MCF 10A (cell line): ENCODE measurements at regions of chr3 and their contacts with region 1.

Region 1: GRCh38 chr3:87082796-87083440 is 92.0 kb upstream of the VGLL3 start:
- DNase-seq: peak; percentile 78
- H3K4me3 Mint-ChIP-seq: no peak overlapping the region
- H3K27ac Mint-ChIP-seq: no peak overlapping the region
- H3K4me1 Mint-ChIP-seq: peaks cover 6% of the 10 kb centered on the region
- H3K27me3 Mint-ChIP-seq: no peaks in the 10 kb centered on the region
- CTCF ChIP-seq: peak; percentile 56

Region 2: DNA sequence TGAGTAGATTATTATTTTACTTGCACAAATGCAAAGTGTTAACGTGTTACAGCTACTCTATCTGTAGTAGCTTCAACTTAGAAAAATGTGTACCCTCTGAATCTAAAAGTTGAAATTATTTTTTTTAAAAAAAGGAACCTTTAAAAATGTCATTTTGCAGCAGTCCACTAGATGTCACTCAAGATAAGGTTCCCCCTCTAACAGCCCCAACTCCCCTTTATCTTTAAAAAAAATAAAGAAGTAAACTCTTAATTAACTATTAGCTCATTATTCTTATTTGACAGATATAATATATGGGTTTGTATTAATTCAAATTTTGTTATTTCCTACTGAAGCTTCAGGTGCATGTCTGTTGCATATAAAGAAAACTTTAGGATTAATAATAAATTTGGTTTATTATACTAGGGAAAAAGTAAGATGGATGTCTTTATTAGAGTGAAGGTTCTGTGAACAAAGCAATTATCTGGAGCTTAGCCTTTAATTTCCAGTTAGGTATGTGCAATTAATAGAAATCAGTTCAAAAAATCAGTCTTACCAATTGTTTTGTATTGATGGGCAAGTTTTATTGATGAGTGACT is 380.4 kb before region 1 on chr3:
- CTCF ChIA-PET with region 1: interaction called, 3 read pairs
- POLR2A ChIA-PET with region 1: no interaction called
- intact Hi-C with region 1: loop called (anchors 5 kb)
- DNase-seq: peak; percentile 13
- H3K4me3 Mint-ChIP-seq: no peak overlapping the region
- H3K27ac Mint-ChIP-seq: no peak overlapping the region
- H3K4me1 Mint-ChIP-seq: no peaks in the 10 kb centered on the region
- H3K27me3 Mint-ChIP-seq: peaks cover 37% of the 10 kb centered on the region
- CTCF ChIP-seq: peak; percentile 51

Region 3: DNA sequence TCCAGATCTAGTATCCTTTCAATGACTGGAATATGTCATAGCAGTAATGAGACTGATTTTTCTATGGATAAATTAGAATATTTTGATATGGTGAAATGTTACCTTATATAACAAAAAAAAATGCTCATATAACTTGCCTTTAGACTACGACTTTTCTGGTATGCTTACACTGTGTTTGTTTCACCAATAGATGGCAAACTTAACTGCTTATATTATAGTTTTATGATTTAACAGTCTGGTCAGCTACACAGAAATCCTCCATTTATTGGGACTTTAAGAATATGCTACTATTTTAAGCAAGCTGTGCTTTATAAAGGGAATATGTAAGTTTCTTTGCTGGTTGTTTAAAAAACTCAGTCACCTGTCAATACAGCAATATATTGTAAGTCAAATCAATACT is 297.5 kb before region 1 on chr3:
- CTCF ChIA-PET with region 1: interaction called, 85 read pairs
- POLR2A ChIA-PET with region 1: interaction called, 4 read pairs
- intact Hi-C with region 1: loop called (anchors 1 kb)
- DNase-seq: peak; percentile 35
- H3K4me3 Mint-ChIP-seq: no peak overlapping the region
- H3K27ac Mint-ChIP-seq: no peak overlapping the region
- H3K4me1 Mint-ChIP-seq: peaks cover 6% of the 10 kb centered on the region
- H3K27me3 Mint-ChIP-seq: no peaks in the 10 kb centered on the region
- CTCF ChIP-seq: peak; percentile 35

Region 4: DNA sequence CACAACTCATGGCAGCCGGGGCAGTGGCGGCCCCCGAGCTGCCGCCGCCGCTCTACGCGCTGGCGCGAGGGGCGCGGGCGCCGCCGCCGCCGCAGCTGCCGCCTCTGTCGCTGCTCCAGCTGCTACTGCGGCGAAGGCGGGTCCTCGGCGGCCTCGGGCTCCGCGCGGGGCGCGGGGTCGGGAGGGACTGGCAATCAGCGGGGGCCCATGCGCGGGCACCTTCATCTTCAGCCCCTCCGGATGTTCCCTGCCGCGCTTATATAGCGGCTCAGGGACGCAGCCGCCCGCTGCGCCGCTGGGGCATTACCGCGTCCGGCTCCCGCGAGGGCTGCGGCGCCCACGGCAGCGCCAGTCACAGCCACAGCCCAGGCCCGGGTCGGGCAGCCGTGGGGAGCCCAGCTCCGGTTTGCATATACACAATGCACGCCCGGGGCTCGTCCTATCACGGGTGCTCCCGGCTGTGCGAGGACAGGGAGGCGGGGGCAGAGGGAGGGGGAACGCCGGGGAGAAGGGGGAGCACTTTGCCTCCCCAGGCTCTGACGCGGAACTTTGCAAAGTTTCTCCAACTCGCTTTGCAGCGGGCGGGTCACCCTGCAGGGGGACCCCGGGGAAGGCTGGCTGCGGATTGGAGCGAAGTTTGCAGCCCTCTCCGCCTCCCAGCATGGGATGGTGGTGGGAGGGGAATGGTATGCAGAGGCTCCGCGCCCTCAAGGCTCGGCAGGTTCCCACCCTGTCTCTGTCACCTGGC is 92.0 kb before region 1 on chr3 and contains the start of gene VGLL3:
- CTCF ChIA-PET with region 1: interaction called, 6 read pairs
- POLR2A ChIA-PET with region 1: interaction called, 12 read pairs
- intact Hi-C with region 1: loop called (anchors 5 kb)
- DNase-seq: peak; percentile 80
- H3K4me3 Mint-ChIP-seq: peak within 1 kb of the TSS; percentile 82
- H3K27ac Mint-ChIP-seq: peak within 1 kb of the TSS; percentile 87
- H3K4me1 Mint-ChIP-seq: peaks cover 32% of the 10 kb centered on the region
- H3K27me3 Mint-ChIP-seq: no peaks in the 10 kb centered on the region
- CTCF ChIP-seq: no peak
- total RNA-seq, gene VGLL3: 6.3 and 12.2 TPM in 2 replicates

Region 5: DNA sequence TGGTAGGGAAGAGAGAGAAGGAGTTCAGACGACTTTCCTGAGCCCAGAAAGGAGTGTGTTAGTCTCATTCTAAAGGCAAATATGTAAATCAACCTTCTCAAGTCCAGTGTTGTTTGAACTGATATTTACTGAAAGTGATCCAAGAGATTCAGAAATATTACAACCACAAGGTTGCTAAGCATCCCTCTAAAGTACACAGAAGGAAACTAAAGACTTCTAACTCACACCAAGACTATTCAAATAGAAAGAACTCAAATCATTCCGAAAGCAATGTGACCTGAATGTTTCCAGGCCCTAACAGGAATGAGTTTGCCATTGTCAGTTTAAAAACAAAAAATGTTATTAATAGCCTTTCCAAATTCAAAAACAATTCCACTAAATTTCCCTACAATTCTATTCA is 35.1 kb before region 1 on chr3:
- CTCF ChIA-PET with region 1: no interaction called
- POLR2A ChIA-PET with region 1: no interaction called
- intact Hi-C with region 1: no loop called
- DNase-seq: no peak
- H3K4me3 Mint-ChIP-seq: no peak overlapping the region
- H3K27ac Mint-ChIP-seq: no peak overlapping the region
- H3K4me1 Mint-ChIP-seq: no peaks in the 10 kb centered on the region
- H3K27me3 Mint-ChIP-seq: no peaks in the 10 kb centered on the region
- CTCF ChIP-seq: no peak

Region 6: GRCh38 chr3:87167628-87168456 is 84.9 kb after region 1 on chr3:
- CTCF ChIA-PET with region 1: interaction called, 11 read pairs
- POLR2A ChIA-PET with region 1: no interaction called
- intact Hi-C with region 1: loop called (anchors 2 kb)
- DNase-seq: peak; percentile 70
- H3K4me3 Mint-ChIP-seq: peak overlapping the region; percentile 75
- H3K27ac Mint-ChIP-seq: peak overlapping the region; percentile 3
- H3K4me1 Mint-ChIP-seq: no peaks in the 10 kb centered on the region
- H3K27me3 Mint-ChIP-seq: no peaks in the 10 kb centered on the region
- CTCF ChIP-seq: peak; percentile 48